K562 (cell line): ENCODE measurements at regions of chr22 and their contacts with region 1.

Region 1: DNA sequence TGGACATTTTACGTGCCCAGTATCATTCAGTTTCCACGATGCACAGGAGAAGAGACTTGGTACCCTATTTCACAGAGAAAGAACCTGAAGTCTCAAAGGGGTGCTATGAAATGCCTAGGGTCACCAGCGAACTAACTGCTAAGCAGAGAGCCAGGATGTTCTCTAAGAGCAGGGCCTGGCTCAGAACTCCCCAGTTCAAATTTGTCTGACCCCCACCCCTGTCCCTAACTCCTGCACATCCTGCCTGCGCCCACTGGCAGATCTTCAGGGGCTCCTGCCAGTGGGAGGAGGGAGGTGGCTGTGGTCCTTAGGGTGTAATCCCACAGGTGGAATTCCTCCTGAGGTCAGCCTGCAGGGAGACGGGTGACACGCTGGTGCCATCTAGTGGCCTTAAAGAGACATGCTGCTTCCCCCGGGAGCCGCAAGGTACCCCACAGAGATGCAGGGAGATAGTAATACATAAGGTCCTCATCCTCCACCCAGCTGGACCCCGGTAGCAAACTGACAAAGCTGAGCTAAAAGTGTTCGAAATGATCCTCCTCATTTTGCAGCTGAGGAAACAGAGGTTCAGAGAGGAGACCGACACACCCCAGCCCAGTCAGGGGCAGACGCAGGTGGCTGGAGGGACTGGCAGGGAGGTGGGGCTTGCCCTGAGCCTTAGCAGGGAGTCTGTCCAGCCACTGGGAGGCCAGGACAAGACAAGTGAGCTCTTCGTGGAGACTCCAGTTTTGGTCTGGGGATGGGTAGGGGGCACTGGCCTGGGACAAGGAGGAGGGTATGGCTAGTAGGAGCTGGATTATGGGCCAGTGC is 34.1 kb downstream of the MB start:
- DNase-seq: peak; percentile 67 to 85 (median 82)
- ATAC-seq: peak; percentile 92
- H3K4me3 ChIP-seq: no peak overlapping the region
- H3K27ac ChIP-seq: no peak overlapping the region
- H3K4me1 ChIP-seq: no peaks in the 10 kb centered on the region
- H3K27me3 ChIP-seq: no peaks in the 10 kb centered on the region
- CTCF ChIP-seq: peak; percentile 71 to 87 (median 80); a peak in 5 of 6 replicates
- EP300 ChIP-seq: no peak
- POLR2A ChIP-seq: no peak
- RAD21 ChIP-seq: peak; percentile 63 to 82

Region 2: GRCh38 chr22:35037089-35037488 is 546.0 kb before region 1 on chr22:
- CTCF ChIA-PET with region 1: no interaction called
- POLR2A ChIA-PET with region 1: no interaction called
- in situ Hi-C with region 1: no loop called
- intact Hi-C with region 1: no loop called
- DNase-seq: peak in 2 of 4 experiments; percentile 7 to 8
- ATAC-seq: peak; percentile 56; the same call in 2 of the 3 replicates
- H3K4me3 ChIP-seq: no peak overlapping the region
- H3K27ac ChIP-seq: no peak overlapping the region
- H3K4me1 ChIP-seq: no peaks in the 10 kb centered on the region; a peak in 1 of 5 replicates
- H3K27me3 ChIP-seq: no peaks in the 10 kb centered on the region
- CTCF ChIP-seq: peak; percentile 22 to 43 (median 42); a peak in 4 of 6 replicates
- EP300 ChIP-seq: no peak
- POLR2A ChIP-seq: no peak
- RAD21 ChIP-seq: peak in 1 of 2 experiments; percentile 22; a peak in 1 of 4 replicates

Region 3: DNA sequence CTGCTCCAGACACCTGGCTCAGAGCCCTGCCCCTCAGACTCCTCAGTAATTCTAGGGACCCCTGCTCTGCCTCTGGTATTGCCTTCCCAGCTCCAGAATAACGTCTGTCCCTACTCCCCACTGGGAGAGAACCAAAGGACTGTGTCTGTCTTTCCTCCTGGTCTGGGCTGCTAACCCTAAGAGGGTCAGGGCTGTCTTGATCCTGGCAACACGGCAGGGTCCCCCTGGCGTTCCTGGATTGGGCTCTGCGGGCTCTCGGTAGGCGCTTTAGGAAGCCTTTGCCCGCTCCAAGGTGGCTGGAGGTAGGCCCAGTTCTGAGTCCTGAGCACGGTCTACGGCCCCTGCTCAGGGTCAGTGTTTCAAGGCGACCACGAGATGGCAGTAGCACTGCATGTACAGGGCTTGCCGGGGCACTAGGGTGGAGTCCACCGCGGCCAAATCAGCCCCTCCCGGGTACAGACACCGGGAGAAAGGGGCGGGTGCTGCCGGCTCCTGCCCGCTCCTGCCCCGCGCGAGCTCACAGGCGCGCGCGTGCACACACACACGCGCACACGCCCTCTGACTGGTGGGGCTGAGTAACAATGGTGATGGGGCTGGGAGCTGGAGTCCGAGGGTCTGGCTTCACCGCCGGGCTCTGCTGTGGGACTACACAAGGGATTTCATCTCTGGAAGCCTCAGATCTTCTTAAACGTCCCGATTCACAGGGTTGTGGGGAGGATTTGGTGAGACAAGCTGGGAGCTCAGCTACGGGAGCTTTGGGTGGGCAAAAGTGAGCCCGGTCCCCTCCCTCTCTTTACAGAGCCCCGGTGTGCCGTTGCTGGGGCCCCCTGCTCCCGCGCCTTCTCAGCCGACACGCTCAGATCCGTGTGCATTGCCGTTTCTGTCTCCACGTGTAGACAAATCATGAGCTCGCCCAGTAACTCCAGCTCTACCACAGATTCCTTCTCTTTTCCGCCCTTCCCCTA is 232.2 kb before region 1 on chr22:
- CTCF ChIA-PET with region 1: interaction called, 22 read pairs
- POLR2A ChIA-PET with region 1: no interaction called
- in situ Hi-C with region 1: loop called (anchors 5 kb)
- intact Hi-C with region 1: loop called (anchors 1 kb)
- DNase-seq: peak; percentile 87 to 94 (median 92)
- ATAC-seq: peak; percentile 99
- H3K4me3 ChIP-seq: peak overlapping the region; percentile 45
- H3K27ac ChIP-seq: no peak overlapping the region
- H3K4me1 ChIP-seq: peaks cover 5 to 23% of the 10 kb centered on the region in 2 experiments; a peak in 4 of 5 replicates
- H3K27me3 ChIP-seq: no peaks in the 10 kb centered on the region
- CTCF ChIP-seq: peak; percentile 76 to 82 (median 79)
- EP300 ChIP-seq: no peak
- POLR2A ChIP-seq: no peak
- RAD21 ChIP-seq: peak; percentile 85 to 87

Region 4: GRCh38 chr22:35430897-35431322 is 152.2 kb before region 1 on chr22:
- CTCF ChIA-PET with region 1: interaction called, 12 read pairs
- POLR2A ChIA-PET with region 1: no interaction called
- in situ Hi-C with region 1: loop called (anchors 5 kb)
- intact Hi-C with region 1: loop called (anchors 5 kb)
- DNase-seq: peak; percentile 66 to 82 (median 74)
- ATAC-seq: peak; percentile 96
- H3K4me3 ChIP-seq: no peak overlapping the region
- H3K27ac ChIP-seq: no peak overlapping the region
- H3K4me1 ChIP-seq: peaks cover 0 to 2% of the 10 kb centered on the region in 2 experiments; a peak in 1 of 5 replicates
- H3K27me3 ChIP-seq: no peaks in the 10 kb centered on the region
- CTCF ChIP-seq: peak; percentile 71 to 93 (median 77)
- EP300 ChIP-seq: no peak
- POLR2A ChIP-seq: no peak
- RAD21 ChIP-seq: peak; percentile 57 to 65

Region 5: GRCh38 chr22:35498026-35498800 is 84.9 kb before region 1 on chr22:
- CTCF ChIA-PET with region 1: no interaction called
- POLR2A ChIA-PET with region 1: no interaction called
- in situ Hi-C with region 1: loop called (anchors 5 kb)
- intact Hi-C with region 1: loop called (anchors 10 kb)
- DNase-seq: peak in 3 of 4 experiments; percentile 5 to 43 (median 37)
- ATAC-seq: 0 out of 3 replicates have a peak, but pooled peaks have one; percentile 57
- H3K4me3 ChIP-seq: no peak overlapping the region
- H3K27ac ChIP-seq: no peak overlapping the region
- H3K4me1 ChIP-seq: no peaks in the 10 kb centered on the region
- H3K27me3 ChIP-seq: peaks cover 3 to 27% of the 10 kb centered on the region in 2 experiments; a peak in 4 of 5 replicates
- CTCF ChIP-seq: no peak
- EP300 ChIP-seq: no peak
- POLR2A ChIP-seq: no peak
- RAD21 ChIP-seq: no peak

Region 6: DNA sequence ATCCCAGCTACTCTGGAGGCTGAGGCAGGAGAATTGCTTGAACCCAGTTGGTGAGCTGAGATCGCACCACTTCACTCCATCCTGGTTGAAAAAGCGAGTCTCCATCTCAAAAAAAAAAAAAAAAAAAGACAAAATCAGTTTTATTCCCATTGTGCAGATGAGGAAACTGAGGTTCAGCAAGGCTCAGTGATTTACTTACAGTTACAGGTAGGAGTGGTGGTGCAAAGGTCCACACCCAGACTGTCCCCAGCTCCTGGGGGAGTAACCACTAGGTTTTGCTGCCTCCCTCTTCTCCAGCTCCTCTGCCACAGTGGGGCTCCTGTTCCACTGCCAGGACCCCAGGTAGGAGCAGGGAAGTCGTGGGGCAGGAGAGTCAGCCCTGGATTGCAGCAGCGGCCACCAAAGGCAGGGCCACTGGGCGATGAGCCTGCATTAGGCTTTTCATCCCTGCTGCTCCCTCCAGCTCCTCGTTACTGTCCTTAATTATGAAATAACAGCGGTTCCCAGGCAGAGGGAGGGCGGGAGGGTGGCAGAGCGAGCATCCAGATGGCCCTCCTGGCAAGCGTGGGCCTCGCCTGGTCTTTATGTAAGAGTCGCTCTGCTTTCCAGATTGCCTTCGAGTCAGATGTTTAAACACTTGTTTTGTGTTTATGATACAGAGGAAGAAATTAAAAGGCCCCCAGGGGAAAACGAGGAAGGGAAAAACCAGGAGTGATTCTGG is 57.9 kb before region 1 on chr22:
- CTCF ChIA-PET with region 1: no interaction called
- POLR2A ChIA-PET with region 1: no interaction called
- in situ Hi-C with region 1: no loop called
- intact Hi-C with region 1: no loop called
- DNase-seq: no peak
- ATAC-seq: no peak
- H3K4me3 ChIP-seq: no peak overlapping the region
- H3K27ac ChIP-seq: no peak overlapping the region
- H3K4me1 ChIP-seq: peaks cover 8 to 10% of the 10 kb centered on the region in 2 experiments; a peak in 3 of 5 replicates
- H3K27me3 ChIP-seq: peaks cover 0 to 19% of the 10 kb centered on the region in 2 experiments; a peak in 2 of 5 replicates
- CTCF ChIP-seq: no peak
- EP300 ChIP-seq: no peak
- POLR2A ChIP-seq: no peak
- RAD21 ChIP-seq: no peak

Region 7: DNA sequence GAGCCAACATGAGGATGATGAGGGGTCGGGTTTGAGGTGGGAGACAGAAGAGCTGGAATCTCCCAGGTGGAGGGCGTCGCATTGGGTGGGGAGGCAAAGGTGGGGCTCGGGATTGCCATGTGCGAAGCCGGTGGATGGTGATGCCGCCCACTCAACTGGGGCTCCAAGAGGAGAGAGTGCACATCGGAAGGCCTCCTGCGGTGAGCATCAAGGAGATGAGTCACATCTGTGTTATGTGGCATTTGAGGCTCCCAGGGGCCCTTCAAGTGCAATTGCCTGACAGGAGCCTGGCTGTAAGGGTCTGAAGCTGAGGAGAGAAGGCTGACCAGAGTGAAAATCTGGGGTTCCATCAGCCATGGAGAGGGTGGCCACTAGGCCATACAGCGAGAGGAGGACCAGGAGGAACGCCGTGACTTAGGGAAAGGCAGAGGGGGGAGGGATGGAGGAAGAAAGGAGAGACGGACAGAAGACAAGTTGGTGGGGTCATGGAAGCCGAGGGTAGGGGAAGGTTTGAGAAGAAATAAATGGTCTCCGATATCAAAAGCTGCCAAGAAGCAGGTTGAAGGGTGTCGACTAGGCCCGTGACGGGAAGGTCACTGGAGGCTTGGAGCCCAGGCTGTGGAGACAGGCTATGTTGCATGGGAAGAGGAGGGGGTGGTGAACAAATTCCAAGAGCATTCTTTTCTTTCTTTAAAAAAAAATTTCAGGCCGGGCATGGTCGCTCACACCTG is 21.1 kb before region 1 on chr22:
- CTCF ChIA-PET with region 1: no interaction called
- POLR2A ChIA-PET with region 1: no interaction called
- in situ Hi-C with region 1: no loop called
- intact Hi-C with region 1: no loop called
- DNase-seq: peak; percentile 38 to 53 (median 50)
- ATAC-seq: peak; percentile 55
- H3K4me3 ChIP-seq: no peak overlapping the region
- H3K27ac ChIP-seq: no peak overlapping the region
- H3K4me1 ChIP-seq: no peaks in the 10 kb centered on the region; a peak in 2 of 5 replicates
- H3K27me3 ChIP-seq: peaks cover 4 to 34% of the 10 kb centered on the region in 2 experiments
- CTCF ChIP-seq: no peak
- EP300 ChIP-seq: no peak
- POLR2A ChIP-seq: no peak
- RAD21 ChIP-seq: no peak